AG04450 (cell line): ENCODE measurements at regions of chr20 and their contacts with region 1.

Region 1: DNA sequence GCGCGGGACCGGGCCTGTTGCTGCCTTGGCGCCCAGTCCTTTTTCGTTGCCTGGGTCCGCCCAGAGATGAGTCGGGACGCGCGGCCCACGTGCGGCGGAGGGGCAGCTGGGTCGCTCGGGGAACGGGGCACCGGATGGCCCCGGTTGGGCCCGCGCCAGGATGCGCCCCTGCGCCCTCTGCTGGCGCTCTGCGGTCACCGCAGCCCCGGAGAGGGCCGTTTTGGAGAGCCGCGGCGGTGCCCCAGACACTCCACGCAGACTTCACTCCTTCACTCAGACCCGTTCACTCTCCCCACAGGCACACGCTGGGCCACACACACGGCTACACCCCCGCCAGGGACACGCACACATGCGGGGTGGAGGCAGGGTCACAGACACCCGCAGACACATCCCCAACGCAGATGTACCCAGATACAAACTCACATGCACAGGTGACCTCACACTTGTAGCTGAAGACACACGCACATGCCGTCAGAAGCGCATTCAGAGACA is 38.8 kb downstream of the SRC start:
- DNase-seq: no peak
- H3K4me3 ChIP-seq: peak overlapping the region; percentile 17; the same call in 1 of the 2 replicates
- H3K27ac ChIP-seq: no peak overlapping the region
- H3K27me3 ChIP-seq: no peaks in the 10 kb centered on the region
- CTCF ChIP-seq: peak; percentile 82

Region 2: GRCh38 chr20:37270576-37271420 is 113.9 kb before region 1 on chr20:
- CTCF ChIA-PET with region 1: interaction called, 23 read pairs
- POLR2A ChIA-PET with region 1: interaction called, 10 read pairs
- DNase-seq: no peak
- H3K4me3 ChIP-seq: no peak overlapping the region
- H3K27ac ChIP-seq: no peak overlapping the region
- H3K27me3 ChIP-seq: peaks cover 6% of the 10 kb centered on the region
- CTCF ChIP-seq: no peak

Region 3: DNA sequence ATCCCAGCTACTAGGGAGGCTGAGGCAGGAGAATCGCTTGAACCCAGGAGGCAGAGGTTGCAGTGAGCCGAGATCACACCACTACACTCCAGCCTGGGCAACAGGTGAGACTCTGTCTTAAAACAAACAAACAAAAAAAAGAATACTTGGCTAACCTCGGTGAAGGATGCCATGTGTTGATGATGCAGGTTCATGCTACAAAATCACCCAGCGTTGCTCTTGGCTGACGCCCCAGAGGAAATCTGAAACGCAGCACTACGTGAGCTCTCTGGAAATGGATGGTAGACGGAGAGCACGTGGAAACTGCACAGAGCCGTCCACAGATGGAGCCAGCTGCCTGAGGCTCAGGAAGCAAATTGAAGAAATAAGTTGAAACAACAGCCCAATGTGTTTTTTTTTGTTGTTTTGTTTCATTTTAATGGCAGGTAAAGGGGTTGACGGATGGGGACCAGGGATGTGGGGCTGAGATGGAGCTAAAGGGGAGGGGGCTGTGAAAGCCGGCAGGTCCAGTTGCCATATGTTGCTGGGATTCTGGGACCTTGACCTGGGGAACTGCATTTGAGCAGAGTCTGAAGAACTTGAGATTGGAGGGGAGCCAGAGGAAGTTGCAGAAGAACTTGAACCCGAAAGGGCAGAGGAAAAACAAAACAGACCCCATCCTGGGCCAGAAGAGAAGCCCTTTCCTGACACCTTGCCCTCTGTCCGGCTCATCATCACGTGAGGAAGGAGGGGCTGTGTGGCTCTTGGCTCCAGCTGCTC is 108.1 kb before region 1 on chr20:
- CTCF ChIA-PET with region 1: interaction called, 34 read pairs
- POLR2A ChIA-PET with region 1: interaction called, 3 read pairs
- DNase-seq: peak; percentile 85
- H3K4me3 ChIP-seq: peak overlapping the region; percentile 25; the same call in 1 of the 2 replicates
- H3K27ac ChIP-seq: peak overlapping the region; percentile 91
- H3K27me3 ChIP-seq: no peaks in the 10 kb centered on the region
- CTCF ChIP-seq: peak; percentile 47

Region 4: GRCh38 chr20:37282556-37282955 is 102.2 kb before region 1 on chr20:
- CTCF ChIA-PET with region 1: interaction called, 34 read pairs
- POLR2A ChIA-PET with region 1: interaction called, 5 read pairs
- DNase-seq: no peak
- H3K4me3 ChIP-seq: no peak overlapping the region
- H3K27ac ChIP-seq: peak overlapping the region; percentile 31
- H3K27me3 ChIP-seq: peaks cover 3% of the 10 kb centered on the region
- CTCF ChIP-seq: peak; percentile 71

Region 5: GRCh38 chr20:37406010-37406998 is 21.6 kb after region 1 on chr20:
- CTCF ChIA-PET with region 1: no interaction called
- POLR2A ChIA-PET with region 1: no interaction called
- DNase-seq: no peak
- H3K4me3 ChIP-seq: peak overlapping the region; percentile 51
- H3K27ac ChIP-seq: no peak overlapping the region
- H3K27me3 ChIP-seq: peaks cover 31% of the 10 kb centered on the region
- CTCF ChIP-seq: no peak

Region 6: DNA sequence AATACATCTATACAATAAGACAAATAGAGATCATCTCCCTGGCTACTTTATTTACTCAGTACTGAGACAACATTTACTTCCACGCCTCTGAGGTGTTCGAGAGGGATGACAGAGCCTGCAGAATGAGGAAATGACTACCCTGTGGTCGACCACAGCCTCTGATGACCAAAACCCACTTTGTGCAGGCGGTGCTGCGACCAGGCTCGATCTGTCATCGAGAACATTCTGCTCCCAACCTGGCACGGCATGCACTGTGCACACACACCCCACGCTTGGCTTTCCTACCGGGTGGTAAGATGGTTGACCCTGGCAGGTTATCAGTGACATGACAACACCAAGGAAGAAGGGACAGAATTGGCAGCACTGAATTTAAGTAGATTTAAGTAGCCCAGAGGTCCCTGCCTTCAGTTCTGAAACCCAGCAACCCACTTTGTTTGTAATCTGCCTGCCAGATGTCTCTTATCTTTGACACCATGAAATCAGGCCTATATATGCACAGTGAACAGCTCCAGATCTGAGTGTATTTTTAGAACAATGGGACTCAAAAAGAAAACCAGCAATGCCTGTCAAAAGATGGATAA is 605.9 kb after region 1 on chr20:
- CTCF ChIA-PET with region 1: no interaction called
- POLR2A ChIA-PET with region 1: interaction called, 11 read pairs
- DNase-seq: peak; percentile 59
- H3K4me3 ChIP-seq: no peak overlapping the region
- H3K27ac ChIP-seq: no peak overlapping the region
- H3K27me3 ChIP-seq: no peaks in the 10 kb centered on the region
- CTCF ChIP-seq: no peak